A673 (cell line): ENCODE measurements at regions of chr10 and their contacts with region 1.

Region 1: DNA sequence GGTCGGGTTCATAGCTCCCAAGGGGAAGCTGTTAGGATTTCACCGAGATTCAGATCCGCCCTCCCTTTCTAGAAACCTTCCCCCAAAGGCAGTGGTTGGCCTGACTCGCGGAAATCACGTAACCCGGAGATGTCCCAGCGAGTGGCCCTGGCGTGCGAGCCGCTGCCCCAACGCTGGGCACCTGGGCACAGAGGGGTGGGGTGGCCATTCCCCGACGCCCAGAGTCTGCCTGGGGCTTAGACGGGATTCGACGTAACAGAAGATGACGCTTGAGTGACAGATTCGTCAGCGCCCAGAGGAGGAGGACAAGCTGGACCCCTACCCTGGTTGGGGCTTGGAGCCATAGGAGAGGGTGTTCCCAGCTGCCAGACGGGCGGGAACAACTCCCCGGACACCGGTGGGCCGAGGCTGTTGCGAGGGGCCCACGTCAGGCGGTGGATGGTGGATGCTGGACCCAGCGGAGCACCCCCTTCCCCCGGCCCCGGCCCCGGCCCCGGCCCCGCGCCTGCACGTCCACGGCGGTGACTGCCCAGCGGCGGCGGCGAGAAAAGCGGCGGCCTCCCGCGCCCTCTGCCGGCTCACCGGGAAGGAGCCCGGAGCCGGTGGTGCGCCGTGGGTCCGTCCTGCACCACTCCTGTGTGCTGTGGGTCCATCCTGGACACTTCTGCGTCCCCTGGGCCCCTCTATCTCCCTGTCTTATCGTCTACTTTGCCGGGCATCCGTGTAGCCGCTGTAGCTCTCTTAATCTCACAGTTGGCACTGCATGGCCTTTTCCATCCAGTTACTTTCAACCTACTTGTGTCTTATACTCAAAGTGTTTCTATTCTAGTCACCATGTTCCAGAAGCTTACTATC is 35.4 kb upstream of the KNDC1 start:
- DNase-seq: peak; percentile 28
- H3K4me3 ChIP-seq: no peak overlapping the region
- H3K27ac ChIP-seq: no peak overlapping the region
- H3K4me1 ChIP-seq: no peaks in the 10 kb centered on the region
- H3K27me3 ChIP-seq: peaks cover 9% of the 10 kb centered on the region
- CTCF ChIP-seq: peak; percentile 64

Region 2: GRCh38 chr10:132654702-132655661 is 469.6 kb before region 1 on chr10:
- CTCF ChIA-PET with region 1: no interaction called
- POLR2A ChIA-PET with region 1: no interaction called
- intact Hi-C with region 1: loop called (anchors 10 kb)
- DNase-seq: peak; percentile 71
- H3K4me3 ChIP-seq: no peak overlapping the region
- H3K27ac ChIP-seq: no peak overlapping the region
- H3K4me1 ChIP-seq: no peaks in the 10 kb centered on the region
- H3K27me3 ChIP-seq: no peaks in the 10 kb centered on the region
- CTCF ChIP-seq: peak; percentile 90

Region 3: DNA sequence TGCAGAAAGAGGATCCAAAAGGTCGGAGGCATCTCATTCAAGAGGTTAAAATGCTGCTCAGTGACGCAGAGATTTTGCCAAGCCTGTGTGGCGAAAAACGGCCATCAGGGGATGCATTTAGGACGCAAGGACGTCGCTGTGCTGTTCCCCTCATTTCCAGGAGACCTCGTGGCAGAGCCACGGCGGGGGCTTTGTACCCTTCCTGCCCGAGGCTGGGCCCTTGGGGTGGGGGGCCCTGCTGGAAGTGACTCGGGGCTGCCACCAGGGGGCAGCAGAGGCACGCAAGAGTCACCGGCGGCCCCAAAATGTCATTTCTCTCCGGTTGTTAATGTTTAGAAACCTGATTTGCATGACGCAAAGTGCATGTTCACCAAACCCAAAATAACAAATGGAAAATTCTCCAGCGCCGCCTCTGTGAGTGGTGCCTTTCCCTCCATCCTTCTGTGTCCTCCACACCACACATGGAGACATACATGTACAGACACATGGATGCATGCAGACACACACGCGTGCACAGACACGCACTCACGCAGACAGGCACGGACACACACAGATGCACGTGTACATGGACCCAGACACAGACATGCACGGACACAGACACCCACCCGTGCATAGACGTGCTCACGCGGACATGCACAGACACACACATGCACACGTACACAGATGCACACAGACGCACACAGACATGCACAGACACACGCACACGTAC is 287.6 kb before region 1 on chr10:
- CTCF ChIA-PET with region 1: no interaction called
- POLR2A ChIA-PET with region 1: no interaction called
- intact Hi-C with region 1: loop called (anchors 10 kb)
- DNase-seq: peak; percentile 45
- H3K4me3 ChIP-seq: no peak overlapping the region
- H3K27ac ChIP-seq: no peak overlapping the region
- H3K4me1 ChIP-seq: no peaks in the 10 kb centered on the region
- H3K27me3 ChIP-seq: peaks cover 44% of the 10 kb centered on the region
- CTCF ChIP-seq: peak; percentile 93

Region 4: DNA sequence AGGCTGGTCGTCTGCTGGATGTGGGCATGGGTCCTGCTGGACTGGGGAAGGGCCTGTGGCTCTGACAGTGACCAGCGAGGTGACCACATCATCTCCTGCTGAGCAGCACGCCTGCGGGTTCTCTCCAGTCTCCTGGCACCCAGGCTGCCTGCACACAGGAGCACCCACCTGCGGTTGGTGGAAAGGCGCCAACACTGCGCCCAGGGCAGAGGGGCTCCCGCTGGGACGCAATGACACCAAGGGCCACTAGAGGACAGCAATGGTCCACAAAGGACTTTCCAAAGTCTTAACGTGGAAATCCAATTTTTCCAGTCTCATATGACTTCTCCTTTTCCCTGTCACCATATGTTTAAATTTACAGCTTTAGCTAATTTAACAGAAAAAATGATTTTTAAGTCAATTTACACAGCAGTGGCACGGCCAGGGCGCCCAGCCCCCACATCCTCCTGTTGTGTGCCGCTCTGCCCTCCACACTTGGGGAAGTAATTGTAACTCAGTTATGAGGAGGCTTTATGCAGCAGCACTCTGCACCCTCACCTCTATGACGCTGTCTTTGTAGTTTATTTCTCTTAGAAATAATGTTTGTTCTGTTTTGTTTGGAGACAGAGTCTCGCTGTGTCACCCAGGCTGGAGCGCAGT is 220.3 kb before region 1 on chr10:
- CTCF ChIA-PET with region 1: no interaction called
- POLR2A ChIA-PET with region 1: no interaction called
- intact Hi-C with region 1: loop called (anchors 5 kb)
- DNase-seq: peak; percentile 64
- H3K4me3 ChIP-seq: no peak overlapping the region
- H3K27ac ChIP-seq: no peak overlapping the region
- H3K4me1 ChIP-seq: no peaks in the 10 kb centered on the region
- H3K27me3 ChIP-seq: peaks cover 3% of the 10 kb centered on the region
- CTCF ChIP-seq: peak; percentile 88

Region 5: GRCh38 chr10:132939957-132940790 is 184.4 kb before region 1 on chr10:
- CTCF ChIA-PET with region 1: no interaction called
- POLR2A ChIA-PET with region 1: no interaction called
- intact Hi-C with region 1: loop called (anchors 10 kb)
- DNase-seq: no peak
- H3K4me3 ChIP-seq: no peak overlapping the region
- H3K27ac ChIP-seq: no peak overlapping the region
- H3K4me1 ChIP-seq: no peaks in the 10 kb centered on the region
- H3K27me3 ChIP-seq: peaks cover 12% of the 10 kb centered on the region
- CTCF ChIP-seq: 0 out of 2 replicates have a peak, but pooled peaks have one; percentile 19